ENCODE measurements at regions of chr15 and their contacts with region 1.

Region 1: GRCh38 chr15:85730001-85730820 is 64.5 kb downstream of the KLHL25 start:
- DNase-seq: peak; percentile 80
- ATAC-seq: peak; percentile 64
- H3K4me3 ChIP-seq: no peak overlapping the region
- H3K27ac ChIP-seq: no peak overlapping the region
- H3K4me1 ChIP-seq: no peaks in the 10 kb centered on the region
- H3K27me3 ChIP-seq: no peaks in the 10 kb centered on the region
- CTCF ChIP-seq: peak; percentile 76

Region 2: DNA sequence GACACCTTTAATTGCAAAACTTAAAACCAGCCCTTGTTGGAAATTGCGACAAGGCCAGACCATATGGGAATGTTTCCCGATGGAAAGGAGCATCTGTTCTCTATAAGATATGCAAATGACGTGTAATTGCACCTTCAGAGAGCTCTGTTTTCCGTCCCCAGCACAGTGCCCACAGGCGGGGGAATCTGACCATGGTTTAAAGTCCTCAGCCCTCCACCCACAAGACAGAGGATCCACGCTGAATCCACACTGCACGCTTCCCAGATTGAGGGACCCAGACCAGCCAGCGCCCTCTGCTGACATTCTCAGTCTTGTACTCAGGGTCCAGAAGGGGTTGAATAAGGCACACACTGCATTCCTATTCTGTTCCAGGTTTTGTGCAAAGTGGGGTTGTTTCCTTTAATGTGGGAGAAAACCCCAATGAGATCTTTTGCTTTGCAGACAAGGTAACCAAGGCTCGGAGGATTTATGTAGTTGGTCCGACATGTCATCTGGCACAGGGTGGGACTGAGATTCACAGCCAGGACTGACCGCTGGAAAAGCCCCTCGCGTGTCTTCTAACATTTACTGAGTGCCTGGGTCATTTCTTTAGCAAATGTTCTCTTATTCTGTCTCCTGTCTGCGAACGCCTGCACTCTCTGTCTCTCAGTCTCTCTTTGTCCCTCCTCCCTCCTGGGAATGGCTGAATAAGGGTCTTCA is 101.4 kb after region 1 on chr15:
- CTCF ChIA-PET with region 1: no interaction called
- POLR2A ChIA-PET with region 1: no interaction called
- intact Hi-C with region 1: loop called (anchors 2 kb)
- DNase-seq: peak; percentile 56
- ATAC-seq: peak; percentile 92
- H3K4me3 ChIP-seq: no peak overlapping the region
- H3K27ac ChIP-seq: no peak overlapping the region
- H3K4me1 ChIP-seq: no peaks in the 10 kb centered on the region
- H3K27me3 ChIP-seq: no peaks in the 10 kb centered on the region
- CTCF ChIP-seq: peak; percentile 77

Region 3: DNA sequence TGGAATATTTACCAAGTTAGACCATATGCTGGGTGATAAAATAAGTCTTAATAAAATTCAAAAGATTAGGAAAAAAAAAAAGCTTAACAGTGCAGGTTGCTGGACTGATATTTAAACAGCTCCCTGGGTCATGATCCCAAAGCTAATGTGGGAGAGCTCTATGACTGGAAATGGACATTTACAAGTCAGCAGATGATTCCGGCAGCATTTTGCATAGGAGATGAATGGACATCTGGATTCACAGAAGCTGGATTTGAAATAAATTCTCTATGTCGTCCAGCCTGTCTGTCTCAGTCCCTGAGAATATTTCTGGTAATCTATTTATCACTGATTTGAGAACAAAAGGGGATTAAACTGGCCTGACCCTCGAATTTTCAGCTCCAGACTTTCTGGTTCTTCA is 116.8 kb after region 1 on chr15:
- CTCF ChIA-PET with region 1: no interaction called
- POLR2A ChIA-PET with region 1: no interaction called
- intact Hi-C with region 1: no loop called
- DNase-seq: no peak
- ATAC-seq: no peak
- H3K4me3 ChIP-seq: no peak overlapping the region
- H3K27ac ChIP-seq: no peak overlapping the region
- H3K4me1 ChIP-seq: no peaks in the 10 kb centered on the region
- H3K27me3 ChIP-seq: peaks cover 12% of the 10 kb centered on the region
- CTCF ChIP-seq: no peak